Head of caudate nucleus (tissue), 42 donors: ENCODE measurements at regions of chr3 and their contacts with region 1.

Region 1: DNA sequence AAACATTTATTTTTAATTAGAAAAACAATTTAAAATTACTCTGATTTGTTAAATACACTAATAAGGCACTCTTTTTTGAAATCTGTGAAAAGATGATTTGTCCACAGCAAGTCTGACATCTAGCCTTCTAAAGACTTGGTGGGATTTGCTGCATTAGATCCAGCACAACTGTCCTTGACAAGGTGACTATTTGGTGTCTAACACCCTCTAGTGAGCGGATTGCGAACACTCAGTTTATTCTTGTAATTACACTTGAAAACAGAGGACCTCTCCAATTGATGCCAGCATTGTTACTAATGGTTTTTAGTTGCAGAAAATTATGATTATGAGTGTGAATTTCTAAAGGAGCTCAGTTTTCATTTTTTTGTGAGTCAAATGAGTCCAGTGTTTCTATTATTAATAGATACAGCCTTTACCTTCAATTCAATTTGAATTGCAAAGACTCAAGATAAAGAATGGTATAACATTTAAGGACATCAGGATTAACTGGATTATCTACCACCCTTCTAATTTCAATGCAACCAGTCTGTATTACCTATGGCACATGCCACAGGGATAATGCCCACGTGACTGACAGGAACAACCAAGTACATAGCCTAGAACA is 29.7 kb upstream of the STRIT1 start:
- DNase-seq: peak in 14 of 42 donors; percentile 31 to 69 (median 48)

Region 2: DNA sequence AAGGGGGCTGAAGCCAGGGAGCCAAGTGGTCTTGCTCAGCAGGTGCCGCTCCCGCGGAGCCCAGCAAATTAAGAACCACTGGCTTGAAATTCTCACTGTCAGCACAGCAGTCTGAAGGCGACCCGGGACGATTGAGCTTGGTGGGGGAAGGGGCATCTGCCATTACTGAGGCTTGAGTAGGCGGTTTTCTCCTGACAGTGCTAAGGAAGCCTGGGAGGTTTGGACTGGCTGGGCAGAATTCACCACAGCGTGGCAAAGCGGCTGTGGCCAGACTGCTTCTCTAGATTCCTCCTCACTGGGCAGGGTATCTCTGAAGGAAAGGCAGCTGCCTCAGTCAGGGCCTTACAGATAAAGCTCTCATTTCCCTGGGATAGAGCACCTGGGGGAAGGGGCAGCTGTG is 836.2 kb before region 1 on chr3:
- intact Hi-C with region 1: no loop called
- DNase-seq: no peak

Region 3: GRCh38 chr3:154766765-154767503 is 556.2 kb before region 1 on chr3:
- intact Hi-C with region 1: loop called (anchors 10 kb)
- DNase-seq: no peak

Region 4: GRCh38 chr3:155164306-155164705 is 158.9 kb before region 1 on chr3:
- intact Hi-C with region 1: loop called (anchors 10 kb)
- DNase-seq: no peak

Region 5: DNA sequence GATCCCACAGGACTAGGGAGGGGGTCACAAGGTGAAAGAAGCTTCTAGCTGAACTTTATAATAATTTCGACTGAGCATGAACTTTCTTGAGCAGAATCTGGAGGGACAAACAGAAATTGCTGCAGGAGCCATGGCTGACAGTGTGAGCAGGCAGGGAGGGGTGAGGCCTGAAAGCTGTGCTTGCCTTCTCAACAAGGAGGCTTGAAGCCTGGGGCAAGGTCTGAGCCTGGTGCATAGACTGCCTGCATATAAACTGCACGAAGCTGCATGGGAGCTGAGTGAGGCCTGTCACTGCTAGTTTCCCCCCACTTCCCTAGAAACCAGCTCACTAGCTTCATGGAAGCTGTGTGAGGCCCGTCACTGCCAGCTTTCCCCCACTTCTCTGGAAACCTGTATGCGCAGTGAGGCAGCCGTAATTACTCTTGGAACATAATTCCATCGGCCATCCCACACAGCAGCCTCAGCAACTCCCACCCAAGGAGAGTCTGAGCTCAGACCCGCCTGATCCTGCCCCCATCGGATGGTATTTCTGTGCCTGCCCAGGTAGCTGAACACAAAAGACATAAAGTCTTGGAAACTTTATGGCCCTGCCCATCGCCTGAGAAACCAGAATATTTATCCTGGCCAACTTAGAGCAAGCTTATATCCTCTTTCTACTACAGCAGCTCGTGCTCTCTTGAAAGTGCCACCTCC is 285.2 kb after region 1 on chr3:
- intact Hi-C with region 1: no loop called
- DNase-seq: no peak